H1 (cell line): ENCODE measurements at regions of chr19 and their contacts with region 1.

Region 1: DNA sequence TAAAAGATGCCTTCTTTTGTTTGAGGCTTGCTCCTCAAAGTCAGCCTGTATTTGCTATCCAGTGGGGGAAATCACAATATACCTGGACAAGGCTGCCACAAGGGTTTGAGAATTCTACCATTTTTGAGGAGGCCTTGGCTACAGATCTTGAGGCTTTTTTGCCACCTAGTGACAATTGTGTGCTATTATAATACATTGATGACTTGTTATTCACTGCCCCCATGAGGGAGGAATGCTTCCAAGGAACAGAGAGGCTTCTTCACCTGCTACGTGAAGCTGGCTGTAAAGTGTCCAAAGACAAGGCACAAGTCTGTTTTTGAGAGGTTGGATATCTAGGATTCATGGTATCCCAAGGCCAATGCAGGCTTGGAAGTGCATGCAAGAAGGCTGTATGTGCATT is 72.5 kb downstream of the ZNF708 start:
- DNase-seq: peak in 1 of 2 experiments; percentile 25
- H3K4me3 ChIP-seq: no peak overlapping the region
- H3K27ac ChIP-seq: no peak overlapping the region
- H3K4me1 ChIP-seq: no peaks in the 10 kb centered on the region
- H3K27me3 ChIP-seq: no peaks in the 10 kb centered on the region
- CTCF ChIP-seq: peak in 2 of 3 experiments; percentile 73 to 99; a peak in 3 of 4 replicates
- EP300 ChIP-seq: no peak
- POLR2A ChIP-seq: no peak
- RAD21 ChIP-seq: peak; percentile 85 to 87

Region 2: GRCh38 chr19:21202865-21203494 is 53.7 kb before region 1 on chr19:
- CTCF ChIA-PET with region 1: interaction called, 69 read pairs
- POLR2A ChIA-PET with region 1: interaction called, 4 read pairs
- DNase-seq: peak; percentile 61 to 63
- H3K4me3 ChIP-seq: no peak overlapping the region
- H3K27ac ChIP-seq: no peak overlapping the region
- H3K4me1 ChIP-seq: peaks cover 0 to 4% (median 2%) of the 10 kb centered on the region in 4 experiments; a peak in 2 of 7 replicates
- H3K27me3 ChIP-seq: no peaks in the 10 kb centered on the region
- CTCF ChIP-seq: peak in 2 of 3 experiments; percentile 95 to 97; a peak in 3 of 4 replicates
- EP300 ChIP-seq: no peak
- POLR2A ChIP-seq: no peak
- RAD21 ChIP-seq: peak; percentile 98 to 99

Region 3: DNA sequence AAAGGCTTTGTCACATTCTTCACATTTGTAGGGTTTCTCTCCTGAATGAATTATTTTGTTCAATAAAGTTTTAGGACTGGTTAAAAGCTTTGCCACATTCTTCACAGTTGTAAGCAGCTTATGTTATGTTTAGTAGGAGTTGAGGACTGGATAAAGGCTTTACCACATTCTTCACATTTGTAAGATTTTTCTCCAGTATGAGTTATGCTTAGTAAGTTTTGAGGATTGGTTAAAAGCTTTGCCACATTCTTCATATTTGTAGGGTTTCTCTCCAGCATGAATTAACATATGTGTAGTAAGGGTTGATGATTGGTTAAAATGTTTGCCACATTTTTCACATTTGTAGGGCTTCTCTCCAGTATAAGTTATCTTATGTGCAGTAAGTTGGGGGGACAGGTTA is 35.0 kb before region 1 on chr19:
- CTCF ChIA-PET with region 1: interaction called, 10 read pairs
- POLR2A ChIA-PET with region 1: no interaction called
- DNase-seq: no peak
- H3K4me3 ChIP-seq: peak overlapping the region in 1 of 4 experiments; percentile 37; a peak in 1 of 8 replicates
- H3K27ac ChIP-seq: peak overlapping the region; percentile 56; the same call in 1 of the 2 replicates
- H3K4me1 ChIP-seq: peaks cover 0 to 2% (median 0%) of the 10 kb centered on the region in 4 experiments; a peak in 1 of 7 replicates
- H3K27me3 ChIP-seq: no peaks in the 10 kb centered on the region
- CTCF ChIP-seq: no peak
- EP300 ChIP-seq: peak in 1 of 2 experiments; percentile 54; a peak in 1 of 3 replicates
- POLR2A ChIP-seq: no peak
- RAD21 ChIP-seq: no peak